Dorsolateral prefrontal cortex (tissue), 120 donors: ENCODE measurements at regions of chr3 and their contacts with region 1.

Region 1: DNA sequence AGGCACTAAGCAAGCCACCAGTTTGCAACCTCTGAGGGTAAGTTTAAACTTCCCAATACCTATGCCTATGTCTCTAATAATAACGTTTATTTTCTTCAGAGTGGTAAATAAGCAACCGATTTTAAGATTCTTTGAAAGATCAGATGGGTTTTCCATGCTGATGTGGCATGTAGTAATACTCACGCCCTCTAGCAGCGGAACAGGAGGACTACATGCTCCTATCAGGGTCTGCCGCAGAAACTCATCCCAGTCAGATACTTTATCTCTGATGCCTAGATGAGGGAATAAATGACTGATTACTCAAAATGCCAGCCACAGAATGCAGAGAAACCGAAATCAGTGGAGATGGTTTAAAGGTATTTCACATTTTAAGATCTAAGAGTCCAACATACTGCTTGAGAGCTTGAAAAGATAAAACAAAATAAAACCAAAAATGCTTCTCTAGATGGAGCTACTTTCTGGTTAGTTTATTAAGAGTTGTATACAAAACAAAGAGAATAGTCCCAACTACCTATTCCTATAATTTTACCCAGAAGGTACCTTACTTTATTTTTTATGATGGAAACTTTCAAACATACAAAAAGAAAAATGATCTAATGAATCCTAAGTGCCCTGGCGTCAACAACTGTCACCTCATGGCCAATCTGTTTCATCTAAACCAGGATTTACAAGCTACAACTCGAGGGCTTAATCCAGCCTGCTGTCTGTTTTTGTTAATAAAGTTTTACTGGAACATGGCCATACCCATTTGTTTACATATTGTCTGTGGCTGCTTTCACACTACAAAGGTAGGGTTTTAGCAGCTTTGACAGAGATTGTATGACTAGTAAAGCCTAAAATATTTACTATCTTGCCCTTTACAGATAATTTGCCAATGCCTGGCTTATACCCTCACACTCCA is 37.5 kb upstream of the STIMATE start:
- DNase-seq: peak in 8 of 10 donors; percentile 41 to 68 (median 54)
- H3K4me3 ChIP-seq: no peak overlapping the region
- H3K27ac ChIP-seq: no peak overlapping the region
- H3K27me3 ChIP-seq: no peaks in the 10 kb centered on the region
- CTCF ChIP-seq: peak; percentile 40 to 82 (median 71)

Region 2: DNA sequence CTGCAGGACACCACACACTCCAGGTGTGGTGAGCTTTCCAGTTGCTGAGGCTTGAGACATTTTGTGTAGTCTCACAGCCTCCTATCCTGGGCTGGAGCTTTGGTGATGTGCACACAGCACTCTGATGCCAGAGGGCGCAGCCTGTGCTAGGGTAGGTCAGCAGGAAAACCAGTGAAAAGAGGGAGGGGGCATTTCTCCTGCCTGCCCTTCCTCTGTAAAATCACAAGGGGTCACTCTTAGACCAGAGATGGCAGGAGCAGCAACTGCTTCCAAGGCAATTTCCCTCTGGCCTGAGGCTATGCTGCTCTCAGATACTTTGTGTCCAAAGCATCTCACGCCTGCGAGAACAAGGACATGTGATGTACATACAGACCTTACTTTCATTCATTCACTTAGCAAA is 83.5 kb before region 1 on chr3:
- intact Hi-C with region 1: loop called (anchors 5 to 10 kb)
- DNase-seq: peak in 1 of 10 donors; percentile 19
- H3K4me3 ChIP-seq: no peak overlapping the region
- H3K27ac ChIP-seq: peak overlapping the region in 2 of 59 donors; percentile 14 to 36
- H3K27me3 ChIP-seq: no peaks in the 10 kb centered on the region
- CTCF ChIP-seq: peak in 53 of 56 donors; percentile 25 to 76 (median 54)

Region 3: GRCh38 chr3:52897130-52898122 is 37.5 kb before region 1 on chr3 and contains the start of gene STIMATE:
- intact Hi-C with region 1: loop called in 1 of 2 experiments (anchors 2 kb)
- DNase-seq: peak; percentile 80 to 95 (median 90)
- H3K4me3 ChIP-seq: peak within 1 kb of the TSS; percentile 65 to 99 (median 89)
- H3K27ac ChIP-seq: peak within 1 kb of the TSS in 50 of 59 donors; percentile 5 to 87 (median 68)
- H3K27me3 ChIP-seq: no peaks in the 10 kb centered on the region
- CTCF ChIP-seq: peak in 20 of 56 donors; percentile 6 to 54 (median 26)
- total RNA-seq, gene STIMATE: 9.2 to 40.0 (median 20.3) TPM